ENCODE measurements at regions of chr12 and their contacts with region 1.

Region 1: DNA sequence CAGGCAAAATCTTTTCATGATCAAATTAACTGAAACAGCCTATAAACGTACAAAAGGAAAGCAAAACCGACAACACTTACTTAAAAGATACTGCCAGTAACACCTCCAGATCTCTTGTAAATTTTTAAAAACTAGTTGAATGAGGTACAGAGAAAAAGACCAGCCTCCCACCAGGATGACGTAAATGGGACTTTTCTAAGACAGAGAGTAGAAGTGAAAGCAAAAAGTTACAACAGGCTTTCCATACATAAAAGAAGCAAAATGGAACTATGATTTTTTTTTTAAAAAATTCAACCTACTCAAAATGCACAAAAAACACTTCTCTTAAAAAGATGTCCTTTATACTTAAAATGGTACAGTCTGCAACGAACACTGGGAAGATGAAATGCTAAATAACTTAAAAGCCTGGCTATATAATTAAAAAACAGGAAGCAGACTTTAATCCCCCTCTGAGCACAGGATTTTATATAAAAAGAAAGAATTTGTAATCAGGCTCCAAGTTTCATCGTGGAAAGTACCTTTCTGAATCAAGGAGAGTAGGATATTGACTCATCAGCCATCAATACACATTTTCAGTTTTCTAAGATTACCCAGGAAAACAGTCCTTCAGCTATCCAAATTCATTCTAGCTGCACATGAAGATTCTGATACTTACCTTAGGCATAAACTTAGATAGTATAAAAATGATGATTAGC is 14.2 kb upstream of the MYO1A start:
- DNase-seq: no peak
- ATAC-seq: no peak
- H3K4me3 ChIP-seq: peak overlapping the region in 1 of 10 donors; percentile 10
- H3K27ac ChIP-seq: peak overlapping the region in 1 of 10 donors; percentile 83
- H3K4me1 ChIP-seq: peaks cover 0 to 32% (median 0%) of the 10 kb centered on the region in 9 donors
- H3K27me3 ChIP-seq: no peaks in the 10 kb centered on the region
- CTCF ChIP-seq: no peak

Region 2: DNA sequence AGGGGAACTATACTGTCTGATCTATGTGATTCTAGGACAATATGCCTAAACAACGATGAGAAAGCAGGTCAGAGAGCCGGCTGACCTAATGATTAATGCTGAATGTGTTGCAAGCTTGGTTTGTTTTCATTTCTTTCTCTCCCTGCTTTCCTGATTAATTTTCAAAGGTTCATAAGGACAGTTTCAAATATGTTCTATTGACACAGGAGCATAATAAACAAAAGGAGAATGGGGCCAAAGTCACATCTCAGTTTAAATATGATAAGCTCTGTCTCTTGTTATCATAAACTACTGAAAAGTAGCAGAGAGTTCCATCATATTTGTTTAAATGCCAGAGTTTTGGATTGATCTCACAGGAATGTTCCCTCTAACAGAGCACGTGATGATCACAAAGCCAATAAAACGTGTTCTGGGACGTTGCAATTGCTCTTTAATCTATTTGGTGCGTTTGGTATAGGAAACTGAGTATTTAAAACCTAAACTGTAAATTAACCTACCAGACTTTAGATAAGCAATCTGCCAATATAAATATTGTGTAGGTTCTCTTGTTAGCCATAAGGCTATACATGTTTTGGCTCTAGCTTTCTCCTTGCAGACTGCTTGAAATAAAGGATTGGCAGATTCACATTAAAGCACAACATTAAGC is 304.8 kb before region 1 on chr12:
- intact Hi-C with region 1: loop called in 7 of 10 experiments (anchors 5 to 10 kb)
- DNase-seq: no peak
- ATAC-seq: no peak
- H3K4me3 ChIP-seq: no peak overlapping the region
- H3K27ac ChIP-seq: no peak overlapping the region
- H3K4me1 ChIP-seq: no peaks in the 10 kb centered on the region
- H3K27me3 ChIP-seq: no peaks in the 10 kb centered on the region
- CTCF ChIP-seq: no peak

Region 3: DNA sequence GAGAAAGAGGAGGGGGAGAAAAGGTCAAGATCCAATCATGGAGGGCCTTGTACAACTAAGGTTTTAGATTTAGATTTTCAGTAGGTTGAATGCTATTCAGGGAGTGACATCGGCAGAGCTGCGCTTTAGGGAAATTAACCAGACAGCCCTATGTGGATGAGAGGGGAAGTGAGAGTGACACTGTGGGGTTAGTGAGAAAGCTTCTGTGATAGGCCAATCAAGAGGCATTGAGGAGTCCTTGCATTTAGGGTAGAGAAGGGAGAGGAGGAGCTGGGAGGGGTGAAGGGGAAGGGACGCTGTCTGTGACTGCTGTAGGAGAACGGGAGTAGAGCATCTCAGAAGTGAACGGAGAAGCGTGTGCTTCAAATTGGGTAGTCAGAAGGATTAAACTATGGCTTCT is 297.6 kb before region 1 on chr12:
- intact Hi-C with region 1: loop called in 2 of 10 experiments (anchors 5 to 10 kb)
- DNase-seq: no peak
- ATAC-seq: peak in 2 of 8 donors; percentile 39 to 74
- H3K4me3 ChIP-seq: no peak overlapping the region
- H3K27ac ChIP-seq: no peak overlapping the region
- H3K4me1 ChIP-seq: no peaks in the 10 kb centered on the region
- H3K27me3 ChIP-seq: no peaks in the 10 kb centered on the region
- CTCF ChIP-seq: no peak